Ascending aorta (tissue), 2 donors: ENCODE measurements at regions of chr10 and their contacts with region 1.

Region 1: DNA sequence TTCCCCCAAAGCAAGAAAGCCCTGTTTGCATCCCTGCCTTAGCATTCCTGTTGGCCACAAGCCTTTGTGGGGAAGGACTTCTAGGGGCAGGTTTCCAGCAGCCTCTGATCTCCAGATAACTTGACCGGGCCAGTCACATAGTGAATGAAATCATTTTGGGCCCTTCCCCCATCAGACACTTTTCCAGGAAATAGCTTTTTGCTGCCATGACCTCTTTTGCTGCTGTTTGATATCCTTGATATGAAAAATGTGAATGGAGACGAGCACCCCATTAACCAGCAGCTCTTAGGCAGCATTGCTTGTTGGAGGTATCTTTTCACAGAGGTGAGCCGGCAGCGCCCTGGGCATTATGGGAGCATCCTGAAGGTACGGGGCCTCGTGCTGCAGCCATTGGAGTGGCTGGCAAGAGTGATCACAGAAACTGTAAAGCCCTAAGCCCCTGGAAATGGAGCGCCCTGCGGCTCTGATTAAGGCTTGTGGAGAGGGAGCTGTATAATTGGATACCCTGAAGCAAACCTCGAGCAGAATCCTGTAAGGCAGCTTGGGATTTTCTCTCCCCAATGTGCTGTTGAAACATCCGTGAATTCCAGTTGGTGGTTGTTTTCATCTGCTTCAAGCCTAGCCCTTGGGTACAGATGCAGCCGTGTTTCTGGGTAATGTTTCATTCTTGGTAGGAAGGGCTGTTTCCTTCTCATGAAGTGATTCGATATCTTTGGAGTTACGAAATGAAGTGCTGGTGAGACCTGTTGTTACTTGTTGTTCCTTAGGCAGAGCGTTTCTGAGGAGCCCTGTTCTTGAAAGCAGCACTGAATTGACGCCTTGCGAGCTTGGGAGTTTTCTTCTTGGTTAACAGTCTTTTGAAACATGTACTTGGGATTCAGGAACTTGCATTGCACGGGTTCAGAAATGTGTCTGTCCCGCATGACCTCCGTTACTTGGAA is 179.0 kb downstream of the PTEN start:
- DNase-seq: peak in 1 of 2 donors; percentile 78
- H3K4me3 ChIP-seq: peak overlapping the region in 1 of 2 donors; percentile 32
- H3K27ac ChIP-seq: peak overlapping the region; percentile 90
- H3K4me1 ChIP-seq: peaks cover 7 to 62% of the 10 kb centered on the region in 2 donors
- H3K27me3 ChIP-seq: no peaks in the 10 kb centered on the region
- CTCF ChIP-seq: no peak

Region 2: GRCh38 chr10:87961046-87961713 is 81.2 kb before region 1 on chr10:
- intact Hi-C with region 1: loop called (anchors 1 kb)
- DNase-seq: no peak
- H3K4me3 ChIP-seq: no peak overlapping the region
- H3K27ac ChIP-seq: peak overlapping the region; percentile 63 to 73
- H3K4me1 ChIP-seq: peaks cover 0 to 23% of the 10 kb centered on the region in 2 donors
- H3K27me3 ChIP-seq: no peaks in the 10 kb centered on the region
- CTCF ChIP-seq: no peak

Region 3: DNA sequence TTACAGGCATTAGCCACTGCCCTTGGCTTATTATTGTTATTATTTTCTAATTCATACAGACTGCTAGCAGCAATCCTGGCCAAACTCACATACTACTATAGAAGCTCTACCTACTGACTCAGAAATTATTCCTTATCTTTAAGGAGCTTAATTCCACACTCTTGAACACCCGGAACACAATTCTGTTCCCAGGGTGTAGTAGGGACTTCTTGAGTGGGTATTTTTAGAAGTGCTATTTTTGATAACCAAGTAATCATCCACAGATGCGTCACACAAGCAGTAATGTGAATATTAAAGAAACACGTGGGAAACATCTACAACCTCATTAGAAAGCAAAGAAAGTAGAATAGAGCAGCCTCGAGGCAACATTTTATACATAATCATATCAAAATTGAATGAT is 29.8 kb before region 1 on chr10:
- intact Hi-C with region 1: loop called (anchors 2 kb)
- DNase-seq: no peak
- H3K4me3 ChIP-seq: no peak overlapping the region
- H3K27ac ChIP-seq: peak overlapping the region; percentile 16 to 67
- H3K4me1 ChIP-seq: peaks cover 0 to 5% of the 10 kb centered on the region in 2 donors
- H3K27me3 ChIP-seq: no peaks in the 10 kb centered on the region
- CTCF ChIP-seq: no peak

Region 4: GRCh38 chr10:88114368-88114767 is 71.9 kb after region 1 on chr10:
- intact Hi-C with region 1: loop called (anchors 5 kb)
- DNase-seq: no peak
- H3K4me3 ChIP-seq: no peak overlapping the region
- H3K27ac ChIP-seq: no peak overlapping the region
- H3K4me1 ChIP-seq: peaks cover 4 to 11% of the 10 kb centered on the region in 2 donors
- H3K27me3 ChIP-seq: no peaks in the 10 kb centered on the region
- CTCF ChIP-seq: peak; percentile 15 to 55 (median 46)

Region 5: GRCh38 chr10:88165849-88166271 is 123.4 kb after region 1 on chr10:
- intact Hi-C with region 1: loop called (anchors 5 kb)
- DNase-seq: no peak
- H3K4me3 ChIP-seq: peak overlapping the region in 1 of 2 donors; percentile 26
- H3K27ac ChIP-seq: peak overlapping the region; percentile 73 to 78
- H3K4me1 ChIP-seq: peaks cover 0 to 15% of the 10 kb centered on the region in 2 donors
- H3K27me3 ChIP-seq: no peaks in the 10 kb centered on the region
- CTCF ChIP-seq: no peak

Region 6: DNA sequence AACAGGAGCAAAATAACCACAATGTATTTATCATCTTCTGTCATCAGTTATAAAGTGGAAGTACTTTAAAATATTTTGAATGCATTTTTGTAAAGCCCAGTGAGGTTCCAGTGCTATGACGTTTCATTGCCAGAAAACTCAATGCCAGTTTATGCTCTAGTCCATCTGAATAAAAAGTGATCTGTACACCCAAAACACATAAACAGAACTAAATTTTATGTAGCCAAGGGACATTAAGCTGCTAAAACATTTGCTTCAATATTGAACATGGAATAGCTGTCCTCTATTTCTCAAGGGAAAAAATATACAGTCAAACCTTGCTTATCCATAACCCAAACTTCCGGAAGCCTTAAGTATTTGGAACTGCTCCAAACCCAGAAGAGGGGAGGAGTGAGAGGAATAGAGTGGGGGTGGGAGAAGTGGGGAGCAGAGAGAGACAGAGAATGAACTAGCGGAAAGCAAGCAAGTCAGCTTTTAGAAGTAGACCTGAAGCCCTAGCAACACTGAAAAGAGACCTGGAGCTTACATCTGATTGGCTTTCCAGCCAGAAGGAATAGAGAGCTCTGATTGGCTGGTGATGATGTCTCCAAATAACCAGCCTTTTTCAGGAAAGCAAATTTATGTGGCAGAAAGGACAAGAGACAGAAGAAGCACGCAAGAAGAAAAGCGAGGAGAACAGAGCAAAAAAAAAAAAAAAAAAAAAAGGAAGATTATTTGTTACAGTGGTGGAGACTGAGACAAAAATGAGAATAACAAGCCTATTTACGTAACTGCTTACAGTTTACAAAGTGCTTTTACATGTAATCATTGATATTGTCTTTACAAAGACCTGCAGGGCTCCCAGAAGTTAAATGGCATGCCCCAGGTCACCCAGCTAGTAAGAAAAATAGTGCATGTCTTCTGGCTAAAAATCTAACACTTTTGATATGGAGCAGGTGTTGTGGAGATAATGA is 344.7 kb after region 1 on chr10:
- intact Hi-C with region 1: loop called (anchors 2 kb)
- DNase-seq: peak in 1 of 2 donors; percentile 71
- H3K4me3 ChIP-seq: peak overlapping the region; percentile 48 to 49
- H3K27ac ChIP-seq: peak overlapping the region; percentile 73 to 78
- H3K4me1 ChIP-seq: peaks cover 7 to 9% of the 10 kb centered on the region in 2 donors
- H3K27me3 ChIP-seq: no peaks in the 10 kb centered on the region
- CTCF ChIP-seq: no peak